PC-3 (cell line): ENCODE measurements at regions of chr5 and their contacts with region 1.

Region 1: GRCh38 chr5:124748687-124749594 is 2.5 kb upstream of the ZNF608 start:
- DNase-seq: peak; percentile 88
- ATAC-seq: peak; percentile 86
- H3K4me3 ChIP-seq: peak overlapping the region; percentile 89
- H3K27ac ChIP-seq: peak overlapping the region; percentile 58
- H3K4me1 ChIP-seq: peaks cover 26% of the 10 kb centered on the region
- H3K27me3 ChIP-seq: no peaks in the 10 kb centered on the region
- CTCF ChIP-seq: no peak

Region 2: DNA sequence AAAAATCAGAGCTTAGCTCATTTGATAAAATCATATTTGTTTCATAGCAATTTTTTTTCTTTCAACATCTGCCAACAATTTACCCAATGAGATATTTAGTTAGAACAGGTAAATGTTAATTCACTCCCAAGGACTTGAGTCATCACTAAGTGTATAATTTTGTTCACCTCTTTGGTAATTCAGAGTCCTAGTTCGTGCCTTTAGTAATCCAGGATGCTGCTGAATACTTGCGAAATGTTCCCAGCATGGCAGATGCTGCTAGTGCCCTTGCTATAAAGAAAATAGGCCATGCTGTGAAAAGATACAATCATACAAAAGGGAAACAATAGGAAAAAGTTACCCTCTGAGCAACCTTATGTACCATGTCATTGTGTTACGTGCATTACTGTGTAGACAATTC is 1026.5 kb before region 1 on chr5:
- CTCF ChIA-PET with region 1: no interaction called
- POLR2A ChIA-PET with region 1: no interaction called
- intact Hi-C with region 1: no loop called
- DNase-seq: no peak
- ATAC-seq: no peak
- H3K4me3 ChIP-seq: no peak overlapping the region
- H3K27ac ChIP-seq: no peak overlapping the region
- H3K4me1 ChIP-seq: peaks cover 29% of the 10 kb centered on the region
- H3K27me3 ChIP-seq: no peaks in the 10 kb centered on the region
- CTCF ChIP-seq: no peak

Region 3: DNA sequence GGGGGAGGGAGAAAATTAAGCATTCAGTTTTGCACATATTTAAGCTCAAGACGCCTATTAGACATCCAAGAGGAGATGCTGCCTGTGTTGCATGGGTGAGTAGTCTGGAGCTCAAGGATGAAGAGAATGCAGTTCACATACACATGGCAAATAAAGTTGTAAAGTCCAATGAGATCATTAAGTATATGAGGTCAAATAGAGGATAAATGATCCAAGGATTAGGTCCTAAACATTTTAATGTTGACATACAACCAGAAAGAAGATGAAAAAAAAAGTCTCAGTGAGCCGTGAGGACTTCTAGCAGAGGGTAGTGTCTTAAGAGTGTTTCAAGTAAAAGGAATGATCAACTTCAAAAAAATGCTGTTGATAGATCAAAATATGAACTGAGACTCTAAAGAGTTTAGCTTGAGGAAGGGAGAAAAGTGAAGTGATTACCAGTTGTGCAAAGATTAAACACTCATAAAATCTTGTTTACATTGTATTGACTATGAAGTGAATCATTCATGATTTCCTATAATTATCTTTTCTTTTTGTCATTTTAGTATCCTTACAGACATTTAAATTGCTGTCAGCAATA is 254.3 kb before region 1 on chr5:
- CTCF ChIA-PET with region 1: no interaction called
- POLR2A ChIA-PET with region 1: no interaction called
- intact Hi-C with region 1: loop called (anchors 2 kb)
- DNase-seq: peak; percentile 67
- ATAC-seq: peak; percentile 80
- H3K4me3 ChIP-seq: no peak overlapping the region
- H3K27ac ChIP-seq: peak overlapping the region; percentile 47
- H3K4me1 ChIP-seq: peaks cover 18% of the 10 kb centered on the region
- H3K27me3 ChIP-seq: no peaks in the 10 kb centered on the region
- CTCF ChIP-seq: no peak

Region 4: GRCh38 chr5:124764992-124765611 is 16.2 kb after region 1 on chr5:
- CTCF ChIA-PET with region 1: no interaction called
- POLR2A ChIA-PET with region 1: interaction called, 19 read pairs
- intact Hi-C with region 1: no loop called
- DNase-seq: peak; percentile 13
- ATAC-seq: peak; percentile 64
- H3K4me3 ChIP-seq: no peak overlapping the region
- H3K27ac ChIP-seq: no peak overlapping the region
- H3K4me1 ChIP-seq: no peaks in the 10 kb centered on the region; the same call in 1 of the 2 replicates
- H3K27me3 ChIP-seq: no peaks in the 10 kb centered on the region
- CTCF ChIP-seq: no peak

Region 5: GRCh38 chr5:124948062-124948753 is 199.3 kb after region 1 on chr5:
- CTCF ChIA-PET with region 1: no interaction called
- POLR2A ChIA-PET with region 1: no interaction called
- intact Hi-C with region 1: loop called (anchors 1 kb)
- DNase-seq: peak; percentile 60
- ATAC-seq: peak; percentile 83
- H3K4me3 ChIP-seq: peak overlapping the region; percentile 22; the same call in 1 of the 2 replicates
- H3K27ac ChIP-seq: peak overlapping the region; percentile 90
- H3K4me1 ChIP-seq: peaks cover 30% of the 10 kb centered on the region
- H3K27me3 ChIP-seq: no peaks in the 10 kb centered on the region
- CTCF ChIP-seq: no peak

Region 6: DNA sequence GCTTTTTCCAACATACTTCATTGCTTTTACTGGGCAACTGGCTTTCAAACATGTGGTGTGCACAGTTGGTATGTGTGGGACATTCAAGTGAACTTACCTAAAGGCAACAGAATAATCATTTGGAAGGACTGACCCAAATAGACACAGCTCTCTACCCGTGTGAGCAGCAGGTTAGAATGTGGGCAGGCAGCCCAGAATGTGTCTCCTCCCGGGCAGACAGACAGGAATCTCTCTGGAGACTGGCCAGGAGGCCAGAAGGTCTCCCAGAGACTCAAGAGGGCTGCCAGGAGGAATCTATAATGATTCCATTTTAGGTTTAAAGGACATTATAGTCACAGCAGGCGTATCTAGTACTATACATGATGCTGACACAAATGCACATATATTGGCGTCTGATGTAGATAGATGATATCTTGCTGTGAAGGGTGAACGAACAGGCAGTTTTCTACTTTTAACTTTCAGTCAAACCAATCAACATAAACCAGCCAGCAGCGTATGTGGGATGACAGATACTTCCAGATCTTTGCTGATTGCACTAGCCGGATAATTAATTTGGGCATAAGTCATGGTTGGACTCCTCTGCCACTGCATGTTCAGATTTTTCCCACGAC is 294.9 kb after region 1 on chr5:
- CTCF ChIA-PET with region 1: no interaction called
- POLR2A ChIA-PET with region 1: no interaction called
- intact Hi-C with region 1: loop called (anchors 2 kb)
- DNase-seq: peak; percentile 92
- ATAC-seq: peak; percentile 58
- H3K4me3 ChIP-seq: no peak overlapping the region
- H3K27ac ChIP-seq: peak overlapping the region; percentile 74
- H3K4me1 ChIP-seq: peaks cover 50% of the 10 kb centered on the region
- H3K27me3 ChIP-seq: no peaks in the 10 kb centered on the region
- CTCF ChIP-seq: no peak

Region 7: DNA sequence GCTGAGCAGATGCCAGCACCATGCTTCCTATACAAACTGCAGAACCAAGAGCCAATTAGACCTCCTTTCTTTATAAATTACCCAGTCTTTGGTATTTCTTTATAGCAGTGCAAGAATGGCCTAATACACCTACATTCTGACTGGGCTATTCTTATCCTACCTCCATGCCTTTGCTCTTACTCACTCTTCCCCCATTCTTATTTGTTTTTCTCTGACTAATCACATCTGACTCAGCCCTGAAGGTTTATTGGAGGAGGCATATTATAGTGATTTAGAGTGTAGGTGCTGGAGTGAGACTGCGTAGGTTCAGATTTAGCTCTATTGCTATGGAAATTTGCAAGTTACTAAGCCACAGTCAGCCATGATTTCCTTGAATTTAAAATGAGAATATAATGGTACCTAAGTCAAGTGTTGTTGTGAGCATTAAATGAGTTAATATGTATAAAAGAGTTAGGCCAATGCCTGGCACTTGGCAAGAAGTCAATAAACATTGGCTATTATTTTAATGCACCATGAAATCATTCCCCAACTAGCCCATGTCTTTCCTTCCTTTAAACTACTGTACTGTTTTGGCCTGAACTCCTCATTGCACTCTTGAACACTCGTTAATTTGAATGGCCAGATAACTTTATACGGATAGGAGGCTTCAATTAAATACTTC is 528.7 kb after region 1 on chr5:
- CTCF ChIA-PET with region 1: no interaction called
- POLR2A ChIA-PET with region 1: no interaction called
- intact Hi-C with region 1: loop called (anchors 10 kb)
- DNase-seq: peak; percentile 93
- ATAC-seq: peak; percentile 96
- H3K4me3 ChIP-seq: no peak overlapping the region; the same call in 1 of the 2 replicates
- H3K27ac ChIP-seq: peak overlapping the region; percentile 70
- H3K4me1 ChIP-seq: peaks cover 34% of the 10 kb centered on the region
- H3K27me3 ChIP-seq: no peaks in the 10 kb centered on the region
- CTCF ChIP-seq: no peak

Region 8: GRCh38 chr5:126138281-126138931 is 1389.5 kb after region 1 on chr5:
- CTCF ChIA-PET with region 1: no interaction called
- POLR2A ChIA-PET with region 1: no interaction called
- intact Hi-C with region 1: loop called (anchors 10 kb)
- DNase-seq: peak; percentile 23
- ATAC-seq: peak; percentile 77
- H3K4me3 ChIP-seq: no peak overlapping the region
- H3K27ac ChIP-seq: peak overlapping the region; percentile 44
- H3K4me1 ChIP-seq: peaks cover 33% of the 10 kb centered on the region
- H3K27me3 ChIP-seq: no peaks in the 10 kb centered on the region
- CTCF ChIP-seq: no peak